Activated CD4-positive, alpha-beta T cell treated with anti-CD3 and anti-CD28 coated beads for 36 hours (primary cell): ENCODE measurements at regions of chr22 and their contacts with region 1.

Region 1: DNA sequence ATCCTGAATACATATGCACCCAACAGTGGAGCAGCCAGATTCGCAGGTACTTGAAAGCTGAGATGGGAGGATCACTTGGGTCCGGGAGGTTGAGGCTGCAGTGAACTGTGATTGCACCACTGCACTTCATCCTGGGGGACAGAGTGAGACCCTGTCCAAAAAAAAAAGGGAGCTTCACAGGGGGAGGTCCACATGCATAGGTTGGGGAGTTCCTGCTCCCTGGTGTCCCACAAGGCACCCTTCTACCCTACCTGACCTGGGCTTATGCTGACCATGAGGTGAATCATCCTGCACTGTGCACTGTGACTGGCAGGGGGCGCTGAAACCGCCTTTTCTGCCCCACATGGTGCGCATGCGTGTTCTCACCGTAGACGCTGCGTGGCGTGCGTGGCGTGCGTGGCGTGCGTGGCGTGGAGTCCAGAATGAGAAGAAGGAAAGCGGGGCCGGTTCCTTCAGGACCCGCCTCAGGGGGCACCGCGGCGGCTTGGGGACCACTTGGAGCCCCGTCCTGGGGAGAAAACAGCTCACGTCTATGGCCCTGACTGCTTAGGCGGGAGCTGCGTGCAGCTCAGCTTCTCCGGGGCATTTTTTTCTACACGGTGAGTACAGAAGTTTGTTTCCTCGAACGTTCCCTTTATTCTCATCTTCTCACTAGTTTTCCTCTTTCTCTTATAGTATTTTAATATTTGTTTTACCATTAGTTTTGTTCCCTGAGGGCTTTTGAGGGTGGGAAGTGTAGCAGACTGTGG is 116.6 kb upstream of the GRK3 start:
- DNase-seq: peak; percentile 93
- ATAC-seq: peak; percentile 93
- H3K4me3 Mint-ChIP-seq: peak overlapping the region; percentile 81
- H3K27ac Mint-ChIP-seq: peak overlapping the region; percentile 94
- H3K4me1 Mint-ChIP-seq: peaks cover 39% of the 10 kb centered on the region
- H3K27me3 Mint-ChIP-seq: no peaks in the 10 kb centered on the region

Region 2: GRCh38 chr22:24951942-24952836 is 495.7 kb before region 1 on chr22 and contains the start of gene KIAA1671:
- CTCF ChIA-PET with region 1: no interaction called
- POLR2A ChIA-PET with region 1: no interaction called
- intact Hi-C with region 1: loop called in 1 of 2 experiments (anchors 2 kb)
- DNase-seq: peak; percentile 91
- ATAC-seq: peak; percentile 97
- H3K4me3 Mint-ChIP-seq: peak within 1 kb of the TSS; percentile 75
- H3K27ac Mint-ChIP-seq: no peak within 1 kb of the TSS
- H3K4me1 Mint-ChIP-seq: peaks cover 10% of the 10 kb centered on the region
- H3K27me3 Mint-ChIP-seq: peaks cover 47% of the 10 kb centered on the region
- total RNA-seq, gene KIAA1671: 12.3 to 14.0 TPM

Region 3: GRCh38 chr22:25235547-25236290 is 212.1 kb before region 1 on chr22:
- CTCF ChIA-PET with region 1: no interaction called
- POLR2A ChIA-PET with region 1: no interaction called
- intact Hi-C with region 1: loop called in 1 of 2 experiments (anchors 5 kb)
- DNase-seq: peak; percentile 90
- ATAC-seq: peak; percentile 95
- H3K4me3 Mint-ChIP-seq: no peak overlapping the region
- H3K27ac Mint-ChIP-seq: no peak overlapping the region
- H3K4me1 Mint-ChIP-seq: peaks cover 5% of the 10 kb centered on the region
- H3K27me3 Mint-ChIP-seq: peaks cover 41% of the 10 kb centered on the region

Region 4: GRCh38 chr22:25362215-25362882 is 85.5 kb before region 1 on chr22:
- CTCF ChIA-PET with region 1: no interaction called
- POLR2A ChIA-PET with region 1: no interaction called
- intact Hi-C with region 1: loop called in 1 of 2 experiments (anchors 1 kb)
- DNase-seq: peak; percentile 85
- ATAC-seq: peak; percentile 88
- H3K4me3 Mint-ChIP-seq: no peak overlapping the region
- H3K27ac Mint-ChIP-seq: no peak overlapping the region
- H3K4me1 Mint-ChIP-seq: peaks cover 1% of the 10 kb centered on the region
- H3K27me3 Mint-ChIP-seq: no peaks in the 10 kb centered on the region

Region 5: GRCh38 chr22:25404928-25405816 is 42.7 kb before region 1 on chr22:
- CTCF ChIA-PET with region 1: interaction called, 3 read pairs
- POLR2A ChIA-PET with region 1: no interaction called
- intact Hi-C with region 1: loop called (anchors 1 to 5 kb)
- DNase-seq: peak; percentile 81
- ATAC-seq: peak; percentile 85
- H3K4me3 Mint-ChIP-seq: peak overlapping the region; percentile 86
- H3K27ac Mint-ChIP-seq: peak overlapping the region; percentile 58
- H3K4me1 Mint-ChIP-seq: peaks cover 25% of the 10 kb centered on the region
- H3K27me3 Mint-ChIP-seq: no peaks in the 10 kb centered on the region

Region 6: GRCh38 chr22:25702040-25702439 is 254.2 kb after region 1 on chr22:
- CTCF ChIA-PET with region 1: no interaction called
- POLR2A ChIA-PET with region 1: no interaction called
- intact Hi-C with region 1: loop called in 1 of 2 experiments (anchors 5 kb)
- DNase-seq: no peak
- ATAC-seq: no peak
- H3K4me3 Mint-ChIP-seq: no peak overlapping the region
- H3K27ac Mint-ChIP-seq: no peak overlapping the region
- H3K4me1 Mint-ChIP-seq: peaks cover 13% of the 10 kb centered on the region
- H3K27me3 Mint-ChIP-seq: no peaks in the 10 kb centered on the region

Region 7: DNA sequence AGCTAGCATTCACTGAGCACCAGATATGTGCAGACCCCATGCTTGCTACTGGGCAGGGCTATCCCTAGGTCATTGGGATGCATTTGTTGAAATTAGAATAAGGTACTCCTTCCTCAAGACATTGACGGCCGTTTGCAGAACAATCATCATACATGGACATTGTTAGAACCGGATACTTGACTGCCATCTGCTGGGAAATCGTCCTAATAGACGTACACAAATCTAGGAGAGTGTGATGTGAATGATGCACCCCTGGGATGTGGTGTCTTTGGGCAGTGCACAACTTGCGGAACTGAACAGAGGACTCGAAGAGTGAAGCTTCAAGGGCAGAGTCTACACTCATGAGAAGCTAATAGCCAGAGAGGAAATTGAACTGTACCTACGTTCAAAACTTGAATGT is 330.0 kb after region 1 on chr22:
- CTCF ChIA-PET with region 1: interaction called, 4 read pairs
- POLR2A ChIA-PET with region 1: no interaction called
- intact Hi-C with region 1: loop called in 1 of 2 experiments (anchors 5 kb)
- DNase-seq: peak; percentile 16
- ATAC-seq: no peak
- H3K4me3 Mint-ChIP-seq: no peak overlapping the region
- H3K27ac Mint-ChIP-seq: no peak overlapping the region
- H3K4me1 Mint-ChIP-seq: peaks cover under 1% of the 10 kb centered on the region
- H3K27me3 Mint-ChIP-seq: peaks cover 2% of the 10 kb centered on the region

Region 8: GRCh38 chr22:26161746-26162145 is 713.9 kb after region 1 on chr22:
- CTCF ChIA-PET with region 1: no interaction called
- POLR2A ChIA-PET with region 1: no interaction called
- intact Hi-C with region 1: no loop called
- DNase-seq: no peak
- ATAC-seq: no peak
- H3K4me3 Mint-ChIP-seq: no peak overlapping the region
- H3K27ac Mint-ChIP-seq: no peak overlapping the region
- H3K4me1 Mint-ChIP-seq: no peaks in the 10 kb centered on the region
- H3K27me3 Mint-ChIP-seq: peaks cover 14% of the 10 kb centered on the region